A673 (cell line): ENCODE measurements at regions of chr20 and their contacts with region 1.

Region 1: GRCh38 chr20:32789896-32790750 is 27.9 kb downstream of the DNMT3B start:
- DNase-seq: peak; percentile 75
- H3K4me3 ChIP-seq: no peak overlapping the region
- H3K27ac ChIP-seq: no peak overlapping the region
- H3K4me1 ChIP-seq: peaks cover 16% of the 10 kb centered on the region
- H3K27me3 ChIP-seq: no peaks in the 10 kb centered on the region
- CTCF ChIP-seq: peak; percentile 98

Region 2: DNA sequence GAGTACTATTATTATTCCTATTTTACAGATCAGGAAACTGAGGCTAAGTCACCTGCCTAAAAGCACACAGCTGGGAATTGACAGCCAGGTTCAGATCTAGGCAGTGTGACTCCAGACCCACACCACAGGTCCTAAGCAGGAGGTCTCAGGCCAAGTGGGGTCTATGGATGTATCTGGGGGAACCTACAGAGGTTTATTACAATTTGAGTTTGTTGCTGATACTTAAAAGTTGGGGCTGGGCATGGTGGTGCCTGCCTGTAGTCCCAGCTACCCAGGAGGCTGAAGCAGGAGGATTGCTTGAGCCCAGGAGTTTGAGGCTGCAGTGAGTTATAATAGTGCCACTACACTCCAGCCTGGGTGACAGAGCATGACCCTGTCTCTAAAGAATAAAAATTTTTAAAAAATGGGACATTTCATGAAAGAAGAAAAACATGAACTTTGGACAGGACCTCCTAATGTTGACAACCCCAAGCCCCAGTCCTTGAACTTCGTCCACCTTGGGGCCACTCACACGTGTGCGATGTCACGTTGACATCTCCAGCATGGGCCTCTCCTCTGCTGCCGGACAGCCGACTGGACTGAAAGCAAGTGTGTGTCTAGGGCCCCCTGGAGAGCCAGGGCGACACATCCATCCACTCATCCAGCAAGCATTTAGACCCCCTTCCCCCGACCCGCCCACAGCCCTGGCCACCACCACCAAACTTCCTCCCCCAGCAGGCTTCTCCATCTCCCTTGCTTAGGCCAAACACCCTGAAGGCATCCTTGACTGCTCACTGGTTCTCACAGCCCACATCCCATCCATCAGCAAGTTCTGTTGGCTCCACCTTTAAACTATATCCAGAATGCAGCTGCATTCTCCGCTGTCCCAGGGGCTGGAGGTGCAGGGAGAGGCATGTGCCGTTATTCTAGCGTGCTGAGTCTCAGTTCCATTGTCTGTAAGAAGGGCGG is 245.0 kb before region 1 on chr20:
- CTCF ChIA-PET with region 1: no interaction called
- POLR2A ChIA-PET with region 1: no interaction called
- intact Hi-C with region 1: no loop called
- DNase-seq: no peak
- H3K4me3 ChIP-seq: no peak overlapping the region
- H3K27ac ChIP-seq: no peak overlapping the region
- H3K4me1 ChIP-seq: no peaks in the 10 kb centered on the region
- H3K27me3 ChIP-seq: peaks cover 7% of the 10 kb centered on the region
- CTCF ChIP-seq: no peak

Region 3: GRCh38 chr20:32894026-32894483 is 103.9 kb after region 1 on chr20:
- CTCF ChIA-PET with region 1: no interaction called
- POLR2A ChIA-PET with region 1: no interaction called
- intact Hi-C with region 1: loop called (anchors 5 kb)
- DNase-seq: peak; percentile 56
- H3K4me3 ChIP-seq: no peak overlapping the region
- H3K27ac ChIP-seq: no peak overlapping the region
- H3K4me1 ChIP-seq: no peaks in the 10 kb centered on the region
- H3K27me3 ChIP-seq: no peaks in the 10 kb centered on the region
- CTCF ChIP-seq: peak; percentile 69

Region 4: GRCh38 chr20:33169176-33169794 is 379.2 kb after region 1 on chr20:
- CTCF ChIA-PET with region 1: no interaction called
- POLR2A ChIA-PET with region 1: no interaction called
- intact Hi-C with region 1: no loop called
- DNase-seq: no peak
- H3K4me3 ChIP-seq: no peak overlapping the region
- H3K27ac ChIP-seq: no peak overlapping the region
- H3K4me1 ChIP-seq: no peaks in the 10 kb centered on the region
- H3K27me3 ChIP-seq: peaks cover 6% of the 10 kb centered on the region
- CTCF ChIP-seq: peak; percentile 57